Activated CD4-positive, alpha-beta T cell treated with anti-CD3 and anti-CD28 coated beads, Interleukin-2, amount 10 ng/mL, durations not matched to agents 24 days and 14 days (primary cell): ENCODE measurements at regions of chr10 and their contacts with region 1.

Region 1: GRCh38 chr10:125982260-125982948 is 86.0 kb downstream of the FANK1 start:
- DNase-seq: peak; percentile 66
- H3K4me3 Mint-ChIP-seq: no peak overlapping the region
- H3K27ac Mint-ChIP-seq: no peak overlapping the region
- H3K4me1 Mint-ChIP-seq: no peaks in the 10 kb centered on the region
- H3K27me3 Mint-ChIP-seq: no peaks in the 10 kb centered on the region

Region 2: GRCh38 chr10:124992462-124993344 is 989.7 kb before region 1 on chr10:
- intact Hi-C with region 1: no loop called
- DNase-seq: peak; percentile 77
- H3K4me3 Mint-ChIP-seq: no peak overlapping the region
- H3K27ac Mint-ChIP-seq: no peak overlapping the region
- H3K4me1 Mint-ChIP-seq: no peaks in the 10 kb centered on the region
- H3K27me3 Mint-ChIP-seq: no peaks in the 10 kb centered on the region

Region 3: DNA sequence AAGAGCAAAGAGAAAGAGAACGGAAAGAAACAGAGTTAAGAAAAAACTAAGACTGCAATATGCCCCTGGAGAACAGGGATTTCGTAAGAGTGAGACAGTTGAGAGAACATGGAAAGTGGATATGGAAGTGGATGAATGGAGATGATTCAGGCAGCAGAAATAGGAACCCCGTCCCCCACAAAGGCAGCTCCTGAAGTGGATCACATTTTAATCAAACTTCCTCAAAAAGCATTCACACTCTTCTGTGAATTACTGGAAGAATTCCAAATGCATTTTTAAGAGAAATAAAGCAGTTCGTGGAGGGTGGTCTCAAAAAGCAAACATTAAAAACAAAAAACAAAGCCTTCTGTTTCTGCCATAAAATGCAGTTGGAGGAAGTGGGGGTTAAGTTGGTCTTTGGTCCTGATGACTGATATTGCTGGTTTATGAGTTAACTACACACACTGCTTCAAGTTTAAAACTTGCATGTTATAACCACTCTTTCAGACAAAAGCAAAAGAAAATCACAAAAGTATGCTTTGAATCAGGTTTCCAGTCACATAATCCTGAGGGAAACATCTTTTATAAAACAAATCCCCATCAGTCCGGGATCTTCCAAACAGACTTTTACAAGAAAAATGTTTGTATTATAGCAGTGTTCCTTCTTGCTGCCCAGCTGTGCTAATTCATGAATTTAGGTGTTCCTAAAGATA is 128.2 kb after region 1 on chr10:
- intact Hi-C with region 1: no loop called
- DNase-seq: no peak
- H3K4me3 Mint-ChIP-seq: no peak overlapping the region
- H3K27ac Mint-ChIP-seq: no peak overlapping the region
- H3K4me1 Mint-ChIP-seq: no peaks in the 10 kb centered on the region
- H3K27me3 Mint-ChIP-seq: no peaks in the 10 kb centered on the region

Region 4: DNA sequence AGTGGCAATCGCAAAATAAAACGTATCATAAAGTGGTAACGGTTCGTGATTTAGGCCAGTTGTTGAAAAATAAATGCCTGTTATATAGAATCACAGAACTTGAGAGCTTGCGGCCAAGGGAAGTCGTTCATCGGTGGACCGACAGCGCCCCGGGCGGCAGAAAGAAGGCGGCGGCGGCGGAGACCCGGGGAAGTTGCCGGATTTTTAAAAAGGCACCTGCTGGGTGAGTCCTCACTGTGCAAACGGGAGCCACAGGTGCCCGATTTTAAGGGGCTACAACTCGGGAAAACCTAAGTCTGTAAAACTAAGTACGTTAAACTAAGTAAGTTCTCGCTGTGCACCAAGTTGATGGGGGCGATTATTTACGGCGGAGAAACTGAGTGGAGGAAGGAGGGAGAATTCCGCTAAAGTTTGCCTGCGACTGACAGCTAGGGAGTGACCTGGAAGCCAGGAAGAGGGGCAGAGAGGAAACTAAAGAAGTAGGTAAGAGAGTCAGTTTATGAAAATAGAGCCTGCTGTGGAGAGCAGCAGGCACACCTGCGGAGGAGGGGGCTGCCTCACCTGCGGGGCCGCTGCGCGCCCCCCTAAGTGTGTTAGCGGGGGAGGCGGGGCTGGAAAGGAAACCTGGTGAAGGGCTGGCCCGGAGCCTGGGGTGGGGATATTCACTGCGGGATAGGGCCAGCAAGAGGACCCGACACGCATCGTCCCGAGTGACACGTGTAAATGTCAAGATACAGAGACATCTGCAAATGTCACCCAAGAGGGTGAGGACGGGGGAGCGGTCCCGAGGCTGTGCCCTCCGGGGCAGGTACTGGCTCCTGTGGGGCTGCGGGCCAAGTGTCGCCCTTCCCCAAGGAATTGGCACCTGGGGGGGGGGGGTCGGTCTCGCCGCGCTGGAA is 404.9 kb after region 1 on chr10:
- intact Hi-C with region 1: loop called (anchors 2 kb)
- DNase-seq: peak; percentile 70
- H3K4me3 Mint-ChIP-seq: peak overlapping the region; percentile 11
- H3K27ac Mint-ChIP-seq: peak overlapping the region; percentile 42
- H3K4me1 Mint-ChIP-seq: no peaks in the 10 kb centered on the region
- H3K27me3 Mint-ChIP-seq: peaks cover 31% of the 10 kb centered on the region

Region 5: GRCh38 chr10:126504063-126504739 is 521.8 kb after region 1 on chr10:
- intact Hi-C with region 1: loop called (anchors 2 kb)
- DNase-seq: peak; percentile 56
- H3K4me3 Mint-ChIP-seq: no peak overlapping the region
- H3K27ac Mint-ChIP-seq: no peak overlapping the region
- H3K4me1 Mint-ChIP-seq: no peaks in the 10 kb centered on the region
- H3K27me3 Mint-ChIP-seq: no peaks in the 10 kb centered on the region

Region 6: DNA sequence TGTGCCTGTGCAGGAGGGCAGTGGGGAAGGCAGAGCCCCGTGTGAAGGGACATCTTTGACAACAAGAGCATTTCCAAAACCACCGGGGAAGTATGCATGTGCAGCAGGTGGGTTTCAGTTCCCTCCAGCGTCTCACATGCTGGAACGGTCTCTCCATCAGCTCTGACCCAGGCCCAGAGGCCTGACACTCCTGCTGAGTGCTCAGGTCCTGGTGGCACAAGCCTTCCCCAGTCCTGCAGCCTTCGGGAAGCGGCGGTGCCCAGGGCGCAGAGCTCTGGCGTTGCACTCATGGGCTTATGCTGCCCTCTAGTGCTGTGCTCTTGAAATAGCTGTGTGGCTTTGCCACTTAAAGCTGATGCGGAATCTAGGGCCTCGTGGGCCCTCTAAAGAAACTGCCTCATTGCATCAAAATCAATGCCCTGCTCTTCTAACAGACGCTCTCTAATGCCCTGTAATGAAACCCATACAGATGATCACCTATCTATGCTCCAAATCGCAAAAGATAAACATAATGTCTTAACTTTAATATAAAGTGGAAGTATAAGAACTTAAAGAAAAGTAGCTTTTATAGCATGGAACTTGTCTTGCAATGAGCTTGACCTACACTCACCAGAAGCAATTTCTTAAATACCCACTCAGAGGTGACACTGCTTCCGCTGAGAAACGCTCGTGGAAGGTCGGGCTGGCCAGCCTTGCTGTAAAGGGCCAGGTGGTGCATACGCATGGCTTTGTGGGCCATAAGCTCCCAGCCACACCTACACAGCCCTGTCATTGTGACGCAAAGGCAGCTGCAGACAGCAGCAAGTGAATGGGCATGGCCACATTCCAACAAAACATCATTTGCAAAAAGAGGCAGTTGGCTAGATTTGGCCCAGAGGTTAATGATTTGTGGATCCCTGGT is 1871.7 kb after region 1 on chr10:
- intact Hi-C with region 1: loop called (anchors 10 kb)
- DNase-seq: peak; percentile 80
- H3K4me3 Mint-ChIP-seq: no peak overlapping the region
- H3K27ac Mint-ChIP-seq: no peak overlapping the region
- H3K4me1 Mint-ChIP-seq: no peaks in the 10 kb centered on the region
- H3K27me3 Mint-ChIP-seq: no peaks in the 10 kb centered on the region